Cardiac septum (tissue), 1 donor: ENCODE measurements at regions of chr5 and their contacts with region 1.

Region 1: DNA sequence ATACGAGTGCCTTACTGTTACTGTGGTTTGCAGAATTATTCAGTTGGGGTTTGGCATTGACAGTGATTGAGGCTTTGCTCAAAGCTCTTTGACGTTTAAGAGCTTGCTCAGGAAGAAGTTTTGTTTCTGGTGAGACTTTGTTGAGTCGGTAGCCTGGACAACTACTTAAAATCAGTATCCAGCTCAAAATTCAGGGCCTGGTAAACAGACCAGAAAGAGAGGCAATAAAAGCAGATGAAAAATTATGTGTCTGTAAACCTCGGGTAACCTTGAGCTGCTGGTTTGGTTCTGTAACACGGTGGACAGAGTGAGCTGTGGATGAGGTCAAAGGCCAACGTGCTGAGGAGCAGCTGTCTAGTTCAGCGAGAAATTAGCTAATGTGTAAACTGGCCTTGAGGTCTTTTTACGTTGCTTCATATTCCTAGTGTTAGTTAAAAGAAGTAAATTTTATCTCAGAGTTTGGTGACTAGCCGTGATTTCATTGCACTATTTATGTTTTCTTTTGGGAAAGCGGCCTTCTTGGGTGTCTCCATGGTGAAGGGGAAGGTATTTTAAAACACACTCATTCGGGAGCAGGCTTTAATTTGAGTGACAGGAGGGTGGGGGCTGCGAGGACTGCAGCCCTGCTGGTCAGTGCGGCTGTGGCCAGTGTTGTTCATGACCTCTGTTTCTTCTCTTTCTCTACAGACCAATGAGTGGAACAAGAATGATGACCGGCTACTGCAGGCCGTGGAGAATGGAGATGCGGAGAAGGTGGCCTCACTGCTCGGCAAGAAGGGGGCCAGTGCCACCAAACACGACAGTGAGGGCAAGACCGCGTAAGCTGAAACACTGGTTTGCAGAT is 82.0 kb upstream of the TTC23L start:
- DNase-seq: no peak

Region 2: GRCh38 chr5:34686762-34687268 is 70.2 kb before region 1 on chr5:
- intact Hi-C with region 1: loop called (anchors 5 kb)
- DNase-seq: peak; percentile 77